Activated CD4-positive, alpha-beta T cell treated with anti-CD3 and anti-CD28 coated beads, Interleukin-2, amount 10 ng/mL, durations not matched to agents 24 days and 14 days (primary cell): ENCODE measurements at regions of chrX and their contacts with region 1.

Region 1: DNA sequence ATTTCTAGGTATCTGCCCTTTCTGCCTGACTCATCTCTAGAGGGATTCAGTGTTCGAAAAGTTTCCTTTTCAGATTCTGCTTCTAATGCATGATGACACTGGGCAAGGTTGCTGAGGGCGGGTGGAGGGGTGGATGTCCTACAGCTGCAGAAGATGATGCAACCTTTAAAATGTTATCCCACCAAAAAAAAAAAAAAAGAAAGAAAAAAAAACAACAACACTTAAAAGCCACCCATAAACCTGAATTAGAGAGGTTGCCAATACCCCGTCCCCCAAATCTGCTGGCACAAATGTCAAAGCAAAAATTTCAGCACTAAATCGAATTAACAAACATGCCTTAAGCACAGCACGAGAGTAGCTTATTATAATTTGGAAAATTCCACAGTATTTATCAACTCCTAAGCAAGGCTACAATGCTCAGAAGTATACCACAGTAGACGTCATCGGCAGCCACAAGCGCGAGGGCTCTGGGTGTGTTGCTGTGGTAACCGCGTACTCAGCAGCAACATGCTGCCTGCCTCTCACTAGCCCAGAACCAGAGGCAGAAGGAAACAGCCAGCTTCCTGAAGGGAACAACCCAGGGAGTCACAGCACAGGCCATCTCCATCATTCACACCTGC is 167.5 kb upstream of the MAP3K15 start:
- DNase-seq: peak; percentile 93
- H3K4me3 Mint-ChIP-seq: peak overlapping the region; percentile 76
- H3K27ac Mint-ChIP-seq: peak overlapping the region; percentile 90
- H3K4me1 Mint-ChIP-seq: peaks cover 65% of the 10 kb centered on the region
- H3K27me3 Mint-ChIP-seq: no peaks in the 10 kb centered on the region

Region 2: DNA sequence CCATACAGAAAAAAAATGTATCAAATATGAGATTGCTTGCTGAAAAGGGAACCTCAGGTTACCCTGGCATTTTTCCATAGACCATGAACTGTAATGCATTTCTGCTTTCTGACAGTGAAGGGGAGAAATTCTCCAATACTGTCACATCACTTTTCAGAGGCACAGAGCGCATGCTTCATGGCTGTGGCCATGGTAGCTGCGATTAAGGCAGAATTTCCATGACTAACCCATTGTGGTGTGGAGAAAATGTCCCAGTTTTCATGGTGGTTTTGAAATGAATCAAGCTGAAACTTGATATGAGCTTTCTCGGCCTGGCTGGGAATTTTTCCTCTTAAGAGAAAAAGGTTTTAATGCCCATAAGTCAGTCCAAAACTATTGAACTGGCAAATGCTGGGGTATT is 128.0 kb before region 1 on chrX:
- intact Hi-C with region 1: loop called (anchors 2 kb)
- DNase-seq: peak; percentile 64
- H3K4me3 Mint-ChIP-seq: peak overlapping the region; percentile 53
- H3K27ac Mint-ChIP-seq: peak overlapping the region; percentile 90
- H3K4me1 Mint-ChIP-seq: peaks cover 35% of the 10 kb centered on the region
- H3K27me3 Mint-ChIP-seq: no peaks in the 10 kb centered on the region

Region 3: GRCh38 chrX:19642241-19643109 is 40.3 kb before region 1 on chrX:
- intact Hi-C with region 1: loop called (anchors 5 kb)
- DNase-seq: no peak
- H3K4me3 Mint-ChIP-seq: peak overlapping the region; percentile 50
- H3K27ac Mint-ChIP-seq: peak overlapping the region; percentile 76
- H3K4me1 Mint-ChIP-seq: peaks cover 13% of the 10 kb centered on the region
- H3K27me3 Mint-ChIP-seq: no peaks in the 10 kb centered on the region

Region 4: DNA sequence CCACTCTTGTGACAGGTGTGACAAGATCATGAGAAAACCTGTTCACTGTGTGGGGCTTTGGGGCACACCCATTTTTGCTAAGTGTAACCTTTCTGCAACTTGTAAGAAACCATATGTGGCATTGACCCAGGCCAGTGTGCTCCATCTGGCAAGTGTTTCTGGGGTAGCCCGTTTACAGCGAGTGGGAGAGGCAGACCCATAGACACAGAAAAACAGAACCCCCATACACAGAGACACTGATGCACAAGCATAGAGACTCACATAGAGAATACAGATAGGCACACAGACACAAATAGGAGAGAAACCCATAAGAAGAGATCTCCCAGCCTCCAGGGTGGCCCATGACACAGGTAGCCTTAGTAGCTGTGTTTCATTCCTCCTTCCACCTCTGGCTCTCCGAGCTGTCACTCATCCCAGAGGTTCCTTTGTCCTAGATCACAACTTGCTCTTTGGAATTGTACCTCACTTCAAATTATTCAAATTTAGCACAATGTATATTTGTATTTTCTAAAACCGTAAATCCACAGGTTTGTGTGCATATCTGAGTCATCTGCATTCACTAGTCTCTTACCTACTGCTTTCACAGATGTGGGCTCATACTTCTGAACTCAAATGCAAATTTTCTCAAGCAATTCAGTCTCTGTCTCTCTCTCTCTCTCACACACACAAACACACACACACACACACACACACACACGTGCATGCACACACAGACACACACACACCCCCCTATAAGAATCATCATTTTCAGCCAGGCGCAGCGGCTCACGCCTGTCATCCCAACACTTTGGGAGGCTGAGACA is 90.2 kb after region 1 on chrX:
- intact Hi-C with region 1: loop called (anchors 5 kb)
- DNase-seq: no peak
- H3K4me3 Mint-ChIP-seq: peak overlapping the region; percentile 72
- H3K27ac Mint-ChIP-seq: peak overlapping the region; percentile 93
- H3K4me1 Mint-ChIP-seq: peaks cover 46% of the 10 kb centered on the region
- H3K27me3 Mint-ChIP-seq: no peaks in the 10 kb centered on the region

Region 5: GRCh38 chrX:19789782-19790181 is 107.0 kb after region 1 on chrX:
- intact Hi-C with region 1: no loop called
- DNase-seq: no peak
- H3K4me3 Mint-ChIP-seq: no peak overlapping the region
- H3K27ac Mint-ChIP-seq: no peak overlapping the region
- H3K4me1 Mint-ChIP-seq: peaks cover 33% of the 10 kb centered on the region
- H3K27me3 Mint-ChIP-seq: no peaks in the 10 kb centered on the region

Region 6: GRCh38 chrX:19840899-19841648 is 158.3 kb after region 1 on chrX:
- intact Hi-C with region 1: loop called (anchors 5 kb)
- DNase-seq: peak; percentile 85
- H3K4me3 Mint-ChIP-seq: peak overlapping the region; percentile 75
- H3K27ac Mint-ChIP-seq: peak overlapping the region; percentile 95
- H3K4me1 Mint-ChIP-seq: peaks cover 42% of the 10 kb centered on the region
- H3K27me3 Mint-ChIP-seq: no peaks in the 10 kb centered on the region